Activated naive CD4-positive, alpha-beta T cell treated with anti-CD3 and anti-CD28 coated beads for 36 hours (primary cell): ENCODE measurements at regions of chr5 and their contacts with region 1.

Region 1: DNA sequence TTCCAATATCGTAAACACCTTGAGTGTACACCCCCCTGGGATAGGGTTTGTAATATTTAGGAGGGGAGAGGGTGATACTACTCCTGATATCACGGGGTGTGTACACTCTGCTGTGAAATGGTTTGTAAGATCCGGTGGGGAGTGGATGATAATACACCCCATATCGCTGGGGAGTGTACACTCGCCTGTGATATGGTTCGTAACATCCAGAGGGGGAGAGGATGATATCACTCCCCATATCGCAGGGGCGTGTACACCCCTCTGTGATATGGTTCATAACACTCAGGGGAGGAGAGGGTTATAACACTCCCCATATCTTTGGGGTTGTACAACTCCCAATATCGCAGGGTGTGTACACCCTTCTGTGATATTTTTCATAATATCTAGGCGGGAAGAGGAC is 33.8 kb upstream of the SLC25A48 start:
- DNase-seq: no peak
- H3K4me3 Mint-ChIP-seq: no peak overlapping the region
- H3K27ac Mint-ChIP-seq: no peak overlapping the region
- H3K4me1 Mint-ChIP-seq: no peaks in the 10 kb centered on the region
- H3K27me3 Mint-ChIP-seq: peaks cover 4% of the 10 kb centered on the region

Region 2: GRCh38 chr5:135759149-135759784 is 41.4 kb before region 1 on chr5:
- CTCF ChIA-PET with region 1: no interaction called
- intact Hi-C with region 1: loop called (anchors 5 kb)
- DNase-seq: no peak
- H3K4me3 Mint-ChIP-seq: no peak overlapping the region
- H3K27ac Mint-ChIP-seq: no peak overlapping the region
- H3K4me1 Mint-ChIP-seq: no peaks in the 10 kb centered on the region
- H3K27me3 Mint-ChIP-seq: peaks cover 2% of the 10 kb centered on the region